GM12878 (cell line): ENCODE measurements at regions of chr3 and their contacts with region 1.

Region 1: DNA sequence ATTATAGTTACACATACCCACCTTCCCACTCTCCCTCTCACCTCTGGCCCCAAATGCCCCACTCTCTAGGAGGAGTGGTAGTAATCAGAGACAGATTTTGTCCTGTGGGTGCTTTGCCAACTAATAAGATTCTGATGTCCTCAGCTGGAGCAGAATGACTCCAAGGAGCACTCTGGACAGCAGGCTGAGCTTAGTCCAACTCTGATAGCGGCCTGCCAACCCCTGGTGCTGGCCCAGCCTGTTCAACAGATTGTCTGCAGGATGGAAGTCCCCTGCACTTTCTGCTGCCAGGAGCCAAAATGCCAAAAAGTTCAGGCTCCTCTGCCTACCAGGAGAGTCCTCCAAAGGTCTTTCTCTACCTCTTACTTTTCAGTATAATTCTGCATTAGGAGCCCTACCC is 160.5 kb upstream of the UMPS start:
- DNase-seq: no peak
- ATAC-seq: peak; percentile 24
- H3K4me3 ChIP-seq: no peak overlapping the region
- H3K27ac ChIP-seq: no peak overlapping the region
- H3K4me1 ChIP-seq: peaks cover 6% of the 10 kb centered on the region
- H3K27me3 ChIP-seq: no peaks in the 10 kb centered on the region
- CTCF ChIP-seq: no peak
- EP300 ChIP-seq: no peak
- POLR2A ChIP-seq: no peak
- RAD21 ChIP-seq: no peak

Region 2: DNA sequence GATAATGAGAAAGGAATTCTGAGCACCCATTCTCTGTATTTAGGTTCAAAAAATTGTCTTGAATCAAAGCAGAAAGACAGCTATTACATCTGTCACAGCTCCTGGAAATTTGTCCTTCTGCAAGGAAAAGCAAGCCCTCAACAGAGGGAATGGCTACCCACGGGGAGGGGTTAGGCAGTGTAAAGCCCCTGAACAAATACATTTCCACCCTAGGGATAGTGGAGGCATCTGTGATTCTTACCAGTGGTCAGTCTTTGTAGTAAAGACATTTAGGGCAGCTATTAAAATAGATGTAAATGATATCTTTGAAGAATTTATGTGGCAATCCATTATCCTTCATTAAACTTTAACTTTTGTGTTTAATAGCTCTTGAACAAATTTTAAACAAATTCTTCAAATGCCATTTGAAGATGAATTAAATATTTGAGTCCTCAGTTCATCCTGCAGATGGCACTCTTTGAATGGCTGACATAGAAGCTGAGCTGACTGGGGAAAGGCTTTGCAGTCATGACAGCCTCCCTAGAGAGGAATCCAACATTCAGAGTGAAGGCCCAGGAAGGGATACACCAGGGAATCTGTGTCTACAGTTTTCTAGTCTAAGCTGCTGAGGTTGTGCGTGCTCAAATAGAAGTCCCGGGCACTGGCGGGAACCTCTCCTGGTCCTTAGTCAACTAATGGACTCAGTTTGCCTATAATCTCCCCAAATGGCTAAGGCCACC is 218.2 kb before region 1 on chr3:
- CTCF ChIA-PET with region 1: no interaction called
- POLR2A ChIA-PET with region 1: no interaction called
- RAD21 ChIA-PET with region 1: no interaction called
- SMC1A ChIA-PET with region 1: no interaction called
- in situ Hi-C with region 1: no loop called
- intact Hi-C with region 1: no loop called
- DNase-seq: no peak
- ATAC-seq: peak; percentile 45; the same call in 1 of the 3 replicates
- H3K4me3 ChIP-seq: no peak overlapping the region
- H3K27ac ChIP-seq: no peak overlapping the region
- H3K4me1 ChIP-seq: no peaks in the 10 kb centered on the region
- H3K27me3 ChIP-seq: no peaks in the 10 kb centered on the region; a peak in 1 of 4 replicates
- CTCF ChIP-seq: peak; percentile 33 to 57 (median 44); a peak in 5 of 6 replicates
- EP300 ChIP-seq: no peak
- POLR2A ChIP-seq: no peak
- RAD21 ChIP-seq: peak; percentile 87

Region 3: GRCh38 chr3:124584552-124585391 is 15.0 kb after region 1 on chr3:
- CTCF ChIA-PET with region 1: interaction called, 11 read pairs
- POLR2A ChIA-PET with region 1: interaction called, 5 read pairs
- RAD21 ChIA-PET with region 1: interaction called, 21 read pairs
- SMC1A ChIA-PET with region 1: interaction called, 19 read pairs
- in situ Hi-C with region 1: no loop called
- intact Hi-C with region 1: no loop called
- DNase-seq: no peak
- ATAC-seq: peak; percentile 73
- H3K4me3 ChIP-seq: peak overlapping the region; percentile 61; the same call in 1 of the 2 replicates
- H3K27ac ChIP-seq: no peak overlapping the region
- H3K4me1 ChIP-seq: peaks cover 7% of the 10 kb centered on the region
- H3K27me3 ChIP-seq: peaks cover 3 to 10% of the 10 kb centered on the region in 2 experiments; a peak in 2 of 4 replicates
- CTCF ChIP-seq: no peak
- EP300 ChIP-seq: no peak
- POLR2A ChIP-seq: no peak
- RAD21 ChIP-seq: no peak

Region 4: GRCh38 chr3:124592621-124593441 is 23.1 kb after region 1 on chr3:
- CTCF ChIA-PET with region 1: interaction called, 10 read pairs
- POLR2A ChIA-PET with region 1: no interaction called
- RAD21 ChIA-PET with region 1: interaction called, 21 read pairs
- SMC1A ChIA-PET with region 1: interaction called, 16 read pairs
- in situ Hi-C with region 1: no loop called
- intact Hi-C with region 1: no loop called
- DNase-seq: peak; percentile 70
- ATAC-seq: peak; percentile 91
- H3K4me3 ChIP-seq: peak overlapping the region; percentile 7; the same call in 1 of the 2 replicates
- H3K27ac ChIP-seq: peak overlapping the region; percentile 67
- H3K4me1 ChIP-seq: peaks cover 22% of the 10 kb centered on the region
- H3K27me3 ChIP-seq: no peaks in the 10 kb centered on the region
- CTCF ChIP-seq: no peak
- EP300 ChIP-seq: peak; percentile 11 to 14; a peak in 2 of 4 replicates
- POLR2A ChIP-seq: no peak
- RAD21 ChIP-seq: 0 out of 2 replicates have a peak, but pooled peaks have one; percentile 4

Region 5: DNA sequence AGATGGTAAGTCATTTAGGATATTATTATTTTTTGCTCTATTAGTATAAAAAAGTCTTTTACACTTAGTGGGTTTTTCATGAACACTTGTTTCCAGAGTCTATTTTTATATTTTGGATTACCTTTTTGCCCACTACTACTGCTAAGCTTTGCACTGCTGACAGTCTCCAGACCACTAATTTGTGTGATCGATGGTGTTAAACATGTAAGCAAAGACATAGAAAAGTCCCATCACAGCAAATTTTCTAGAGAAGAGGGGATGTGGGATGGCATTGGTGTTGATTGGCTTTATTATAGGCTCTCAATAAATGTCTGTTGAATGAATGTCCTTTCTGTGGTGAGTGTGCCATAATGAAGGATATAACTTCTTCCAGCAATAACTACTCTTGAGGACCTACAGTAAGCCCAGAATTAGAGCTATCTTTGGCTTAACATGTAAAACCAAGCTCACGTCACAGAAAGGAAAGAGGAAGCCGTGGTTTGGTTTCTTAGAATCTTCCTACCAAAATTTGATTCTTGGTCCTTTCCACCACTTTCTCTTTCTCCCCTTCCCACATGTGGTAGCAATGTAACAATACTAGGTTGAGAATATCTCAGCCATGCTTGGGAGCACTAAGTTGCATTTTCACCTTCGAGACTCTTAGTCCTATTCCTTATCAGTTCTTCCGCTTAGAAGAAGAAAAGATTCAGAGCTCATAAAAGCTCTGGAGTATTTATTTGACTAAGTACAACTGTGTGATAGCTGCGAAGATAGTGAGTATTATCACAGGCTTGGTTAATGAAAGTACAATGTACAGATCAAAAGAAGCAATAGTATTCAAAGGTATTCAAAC is 69.9 kb after region 1 on chr3:
- CTCF ChIA-PET with region 1: interaction called, 22 read pairs
- POLR2A ChIA-PET with region 1: interaction called, 7 read pairs
- RAD21 ChIA-PET with region 1: interaction called, 17 read pairs
- SMC1A ChIA-PET with region 1: interaction called, 17 read pairs
- in situ Hi-C with region 1: no loop called
- intact Hi-C with region 1: no loop called
- DNase-seq: peak; percentile 77
- ATAC-seq: peak; percentile 81
- H3K4me3 ChIP-seq: no peak overlapping the region; the same call in 1 of the 2 replicates
- H3K27ac ChIP-seq: peak overlapping the region; percentile 40
- H3K4me1 ChIP-seq: peaks cover 23% of the 10 kb centered on the region
- H3K27me3 ChIP-seq: no peaks in the 10 kb centered on the region
- CTCF ChIP-seq: no peak
- EP300 ChIP-seq: peak in 1 of 2 experiments; percentile 47; a peak in 2 of 4 replicates
- POLR2A ChIP-seq: no peak
- RAD21 ChIP-seq: no peak